Activated T-helper 2 cell treated with anti-CD3 and anti-CD28 coated beads, Interferon-gamma antibody, Interleukin-2, Interleukin-4, amounts not matched to agents 10 μg/mL and 5 μg/mL and 100 μg/mL, durations not matched to agents 14 hours and 24 hours and 36 hours (primary cell): ENCODE measurements at regions of chrX and their contacts with region 1.

Region 1: DNA sequence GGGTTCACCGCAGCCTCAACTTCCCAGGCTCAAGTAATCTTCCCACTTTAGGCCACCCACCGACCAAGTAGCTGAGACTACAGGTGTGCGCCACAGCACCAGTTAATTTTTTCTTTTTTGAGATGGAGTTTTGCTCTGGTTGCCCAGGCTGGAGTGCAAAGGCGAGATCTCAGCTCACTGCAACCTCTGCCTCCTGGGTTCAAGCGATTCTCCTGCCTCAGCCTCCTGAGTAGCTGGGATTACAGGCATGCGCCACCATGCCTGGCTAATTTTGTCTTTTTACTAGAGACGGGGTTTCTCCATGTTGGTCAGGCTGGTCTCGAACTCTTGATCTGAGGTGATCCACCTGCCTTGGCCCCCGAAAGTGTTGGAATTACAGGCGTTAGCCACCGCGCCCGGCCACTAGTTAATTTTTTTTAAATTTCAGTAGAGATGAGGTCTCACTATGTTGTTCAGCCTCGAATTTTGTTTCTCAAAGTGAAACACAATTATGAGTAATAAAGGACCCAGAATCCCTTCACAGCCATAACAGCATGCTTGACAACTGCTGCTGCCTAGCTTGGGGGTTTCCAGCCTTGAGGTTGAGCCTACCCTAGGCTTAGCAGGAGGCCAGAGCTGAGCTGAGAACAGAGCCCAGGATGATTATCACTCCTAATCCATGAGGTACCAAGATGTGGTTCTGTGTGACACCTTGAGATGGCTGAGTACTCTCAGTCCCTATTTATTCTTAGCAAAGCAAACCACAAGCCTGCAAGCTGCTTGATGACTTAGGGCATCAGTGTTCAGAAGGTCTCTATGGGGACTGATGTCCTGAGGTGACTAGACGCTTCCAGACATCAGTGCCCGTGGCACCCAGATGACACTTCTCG is 41.6 kb upstream of the NKRF start:
- DNase-seq: peak; percentile 27
- H3K4me3 Mint-ChIP-seq: no peak overlapping the region
- H3K27ac Mint-ChIP-seq: peak overlapping the region; percentile 85
- H3K4me1 Mint-ChIP-seq: peaks cover 17% of the 10 kb centered on the region
- H3K27me3 Mint-ChIP-seq: no peaks in the 10 kb centered on the region

Region 2: DNA sequence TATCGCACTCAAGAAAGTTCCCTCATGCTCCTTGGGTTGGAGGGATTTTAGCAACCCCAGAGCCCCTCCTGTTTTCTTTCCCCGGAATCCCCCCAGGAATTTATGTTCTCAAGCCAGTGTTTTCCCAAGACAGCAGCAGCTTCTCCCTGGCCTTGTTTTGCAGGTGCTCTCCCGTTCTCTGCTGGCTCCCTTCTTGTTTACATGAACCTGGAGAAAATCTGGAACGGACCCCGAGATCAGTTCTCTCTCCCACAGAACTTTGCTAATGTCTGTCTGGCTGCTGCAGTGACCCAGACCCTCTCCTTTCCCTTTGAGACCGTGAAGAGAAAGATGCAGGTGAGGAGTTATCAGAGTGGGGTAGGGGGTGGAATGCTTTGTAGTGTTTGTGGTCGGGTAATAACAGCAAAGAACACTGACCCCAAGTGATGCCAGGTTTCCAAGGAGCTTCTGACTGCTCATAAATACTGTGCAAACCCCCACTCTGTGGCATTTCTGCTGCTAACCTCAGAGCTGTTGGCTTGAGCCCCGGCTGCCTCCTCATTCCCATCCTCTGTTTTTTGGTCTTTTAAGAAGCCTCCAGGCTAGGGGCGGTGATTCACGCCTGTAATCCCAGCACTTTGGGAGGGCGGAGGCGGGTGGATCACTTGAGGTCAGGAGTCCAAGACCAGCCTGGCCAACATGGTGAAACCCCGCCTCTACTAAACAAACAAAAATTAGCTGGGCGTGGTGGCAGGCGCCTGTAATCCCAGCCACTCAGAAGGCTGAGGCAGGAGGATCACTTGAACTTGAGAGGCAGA is 237.6 kb before region 1 on chrX:
- intact Hi-C with region 1: no loop called
- DNase-seq: no peak
- H3K4me3 Mint-ChIP-seq: no peak overlapping the region
- H3K27ac Mint-ChIP-seq: no peak overlapping the region
- H3K4me1 Mint-ChIP-seq: no peaks in the 10 kb centered on the region
- H3K27me3 Mint-ChIP-seq: no peaks in the 10 kb centered on the region

Region 3: GRCh38 chrX:119502727-119503483 is 144.9 kb before region 1 on chrX:
- intact Hi-C with region 1: no loop called
- DNase-seq: no peak
- H3K4me3 Mint-ChIP-seq: no peak overlapping the region
- H3K27ac Mint-ChIP-seq: no peak overlapping the region
- H3K4me1 Mint-ChIP-seq: peaks cover 3% of the 10 kb centered on the region
- H3K27me3 Mint-ChIP-seq: no peaks in the 10 kb centered on the region

Region 4: DNA sequence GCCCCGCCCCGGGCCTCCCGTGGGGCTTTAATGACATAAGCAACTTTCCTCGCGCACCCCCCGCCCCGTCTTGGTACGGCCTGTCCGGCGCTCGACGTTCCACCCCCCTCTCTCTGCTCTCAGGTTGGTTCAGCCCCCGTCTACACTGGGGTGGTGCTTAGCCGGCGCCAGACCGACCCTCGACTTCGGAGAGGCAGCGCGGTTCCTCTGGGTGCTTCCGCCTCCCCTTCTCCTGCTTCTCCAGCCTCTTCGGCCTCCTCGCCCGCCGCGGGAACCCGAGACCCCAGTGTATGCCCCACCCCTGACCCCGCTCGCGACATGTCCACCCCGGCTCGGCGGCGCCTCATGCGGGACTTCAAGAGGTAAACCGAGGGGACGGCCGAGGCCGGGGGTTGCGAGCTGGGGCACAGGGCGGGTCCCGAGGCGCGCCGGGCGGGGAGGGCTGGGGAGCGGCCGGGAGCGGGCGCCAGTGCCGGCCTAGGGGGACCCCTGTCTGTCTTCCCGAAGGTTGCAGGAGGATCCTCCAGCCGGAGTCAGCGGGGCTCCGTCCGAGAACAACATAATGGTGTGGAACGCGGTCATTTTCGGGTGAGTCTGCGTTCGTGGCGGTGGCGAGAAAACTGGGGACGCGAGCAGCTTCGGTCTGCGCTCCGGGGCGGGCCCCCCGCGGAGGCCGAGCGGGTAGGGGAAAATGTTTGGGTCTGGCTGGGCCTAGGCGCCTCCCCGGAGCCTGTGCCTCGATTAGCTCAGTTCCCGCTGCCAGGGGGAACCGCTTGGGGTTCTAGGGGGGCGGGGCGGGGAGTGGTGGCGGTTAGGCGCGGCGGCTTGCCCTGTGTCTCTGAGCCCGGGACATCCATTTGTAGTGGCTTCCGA is 73.2 kb before region 1 on chrX and contains the start of gene UBE2A:
- intact Hi-C with region 1: loop called (anchors 2 kb)
- DNase-seq: peak; percentile 82
- H3K4me3 Mint-ChIP-seq: peak within 1 kb of the TSS; percentile 91
- H3K27ac Mint-ChIP-seq: peak within 1 kb of the TSS; percentile 90
- H3K4me1 Mint-ChIP-seq: peaks cover 15% of the 10 kb centered on the region
- H3K27me3 Mint-ChIP-seq: no peaks in the 10 kb centered on the region
- total RNA-seq, gene UBE2A: 60.6 and 61.6 TPM in 2 replicates

Region 5: GRCh38 chrX:119606280-119607015 is 41.3 kb before region 1 on chrX and contains the start of gene NKRF:
- intact Hi-C with region 1: loop called (anchors 5 kb)
- DNase-seq: peak; percentile 86
- H3K4me3 Mint-ChIP-seq: peak within 1 kb of the TSS; percentile 97
- H3K27ac Mint-ChIP-seq: peak within 1 kb of the TSS; percentile 96
- H3K4me1 Mint-ChIP-seq: peaks cover 20% of the 10 kb centered on the region
- H3K27me3 Mint-ChIP-seq: no peaks in the 10 kb centered on the region
- total RNA-seq, gene NKRF: 25.1 and 25.9 TPM in 2 replicates

Region 6: DNA sequence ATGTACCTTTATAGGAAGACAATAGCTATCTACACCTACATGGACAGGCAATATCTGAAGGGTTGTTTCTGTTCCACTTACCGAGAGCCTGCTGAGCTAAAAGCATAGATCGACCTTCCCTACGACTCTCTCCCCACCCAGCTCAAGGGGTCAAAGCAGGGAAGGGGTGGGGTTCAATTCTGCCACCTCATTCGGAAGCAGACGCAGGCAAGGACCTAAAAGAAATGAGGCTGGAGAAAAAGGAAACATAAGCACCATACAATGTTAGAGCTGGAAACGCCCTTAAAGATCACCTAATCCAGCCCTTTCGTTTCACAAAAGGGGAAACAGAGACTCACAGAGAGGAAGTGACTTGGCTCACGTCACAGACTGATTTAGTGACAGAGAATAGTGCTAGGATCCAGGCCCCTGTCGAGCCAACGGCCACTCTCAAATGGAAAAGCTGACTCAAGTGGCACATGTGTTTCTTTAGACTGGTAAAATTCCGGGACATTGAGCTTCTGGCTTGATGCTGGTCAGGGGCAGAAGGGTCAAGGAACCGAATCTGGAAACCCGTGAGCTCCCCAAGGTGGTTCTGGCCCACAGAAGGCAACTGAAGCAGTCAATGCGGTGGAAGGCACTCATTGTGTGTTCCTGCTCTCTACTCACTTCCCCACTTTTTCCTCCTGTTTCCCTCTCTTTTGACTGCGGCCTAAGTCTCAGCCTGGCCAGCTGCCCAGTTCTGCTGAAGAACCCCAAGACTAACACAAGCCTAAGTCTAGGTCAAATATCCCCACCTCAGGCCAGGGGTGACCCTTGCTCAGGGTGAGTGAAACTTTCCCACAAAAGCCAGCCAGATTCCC is 37.7 kb after region 1 on chrX:
- intact Hi-C with region 1: loop called (anchors 1 kb)
- DNase-seq: peak; percentile 50
- H3K4me3 Mint-ChIP-seq: peak overlapping the region; percentile 90
- H3K27ac Mint-ChIP-seq: peak overlapping the region; percentile 100
- H3K4me1 Mint-ChIP-seq: peaks cover 52% of the 10 kb centered on the region
- H3K27me3 Mint-ChIP-seq: no peaks in the 10 kb centered on the region

Region 7: DNA sequence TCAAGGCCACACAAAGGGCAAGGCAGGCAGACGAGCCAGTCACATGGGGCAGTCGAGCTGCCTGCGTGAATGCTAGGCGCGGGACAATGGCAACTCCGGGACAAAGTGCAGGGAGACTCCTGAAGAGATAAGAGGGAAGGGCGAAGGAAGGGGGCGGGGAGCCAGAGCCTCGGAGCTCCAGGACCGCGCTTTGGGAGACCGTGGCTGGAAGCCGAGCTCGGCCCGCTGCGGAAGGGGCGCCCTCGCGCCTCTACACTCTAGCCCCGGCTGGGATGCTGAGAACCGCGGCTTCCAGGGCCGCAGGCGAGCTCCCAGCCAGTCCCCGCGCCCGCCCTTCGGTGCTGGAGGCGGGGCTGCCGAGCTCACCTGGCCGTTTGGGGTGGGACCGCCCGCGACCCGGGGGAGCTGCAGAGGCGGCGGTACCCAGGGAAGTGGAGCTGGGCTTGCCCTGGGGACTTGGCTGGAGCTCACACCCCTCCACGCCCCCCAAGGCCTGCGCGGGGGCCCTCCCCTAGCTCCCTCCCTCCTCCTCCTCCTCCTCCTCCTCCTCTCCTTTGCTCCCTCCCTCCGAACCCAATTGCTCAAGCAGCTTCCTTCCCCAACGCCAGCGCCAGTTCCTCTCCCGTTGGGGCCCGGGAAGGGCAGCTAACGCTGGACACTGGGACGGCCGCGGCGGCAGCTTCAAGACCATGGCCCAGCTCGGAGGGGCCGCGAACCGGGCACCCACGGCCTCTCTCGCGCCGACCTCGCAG is 110.4 kb after region 1 on chrX and contains the start of gene SOWAHD:
- intact Hi-C with region 1: no loop called
- DNase-seq: peak; percentile 9
- H3K4me3 Mint-ChIP-seq: peak within 1 kb of the TSS; percentile 77
- H3K27ac Mint-ChIP-seq: peak within 1 kb of the TSS; percentile 100
- H3K4me1 Mint-ChIP-seq: peaks cover 50% of the 10 kb centered on the region
- H3K27me3 Mint-ChIP-seq: no peaks in the 10 kb centered on the region
- total RNA-seq, gene SOWAHD: 0.46 and 0.59 TPM in 2 replicates

Region 8: GRCh38 chrX:119775517-119776238 is 127.9 kb after region 1 on chrX:
- intact Hi-C with region 1: no loop called
- DNase-seq: no peak
- H3K4me3 Mint-ChIP-seq: no peak overlapping the region
- H3K27ac Mint-ChIP-seq: no peak overlapping the region
- H3K4me1 Mint-ChIP-seq: peaks cover 5% of the 10 kb centered on the region
- H3K27me3 Mint-ChIP-seq: no peaks in the 10 kb centered on the region